Right ventricle myocardium superior (tissue), 1 donor: ENCODE measurements at regions of chr14 and their contacts with region 1.

Region 1: GRCh38 chr14:63388763-63389431 is 70.2 kb upstream of the GPHB5 start:
- DNase-seq: peak; percentile 66
- ATAC-seq: peak; percentile 88

Region 2: GRCh38 chr14:63543000-63543825 is 154.3 kb after region 1 on chr14 and contains the start of gene PPP2R5E:
- intact Hi-C with region 1: loop called (anchors 5 kb)
- DNase-seq: peak; percentile 98
- ATAC-seq: peak; percentile 99
- total RNA-seq, gene PPP2R5E: 32.9 TPM

Region 3: DNA sequence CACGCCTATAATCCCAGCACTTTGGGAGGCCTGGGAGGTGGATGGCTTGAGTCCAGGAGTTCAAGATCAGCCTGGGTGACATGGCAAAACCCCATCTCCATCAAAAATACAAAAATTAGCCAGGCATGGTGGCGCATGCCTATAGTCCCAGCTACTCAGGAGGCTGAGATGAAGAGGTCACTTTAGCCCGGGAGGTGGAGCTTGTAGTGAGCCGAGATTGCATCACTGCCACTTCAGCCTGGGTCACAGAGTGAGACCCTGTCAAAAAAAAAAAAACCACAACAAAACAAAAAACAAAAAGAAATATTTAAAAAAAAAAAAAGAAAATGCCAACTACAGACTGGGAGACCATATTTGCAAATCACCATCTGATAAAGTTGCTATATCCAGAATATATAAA is 235.3 kb after region 1 on chr14:
- intact Hi-C with region 1: loop called (anchors 10 kb)
- DNase-seq: no peak
- ATAC-seq: no peak

Region 4: GRCh38 chr14:63760014-63760413 is 371.1 kb after region 1 on chr14:
- intact Hi-C with region 1: loop called (anchors 10 kb)
- DNase-seq: no peak
- ATAC-seq: no peak